ENCODE measurements at regions of chr3 and their contacts with region 1.

Region 1: GRCh38 chr3:195850857-195851543 is 39.3 kb upstream of the MUC4 start:
- DNase-seq: peak; percentile 90

Region 2: DNA sequence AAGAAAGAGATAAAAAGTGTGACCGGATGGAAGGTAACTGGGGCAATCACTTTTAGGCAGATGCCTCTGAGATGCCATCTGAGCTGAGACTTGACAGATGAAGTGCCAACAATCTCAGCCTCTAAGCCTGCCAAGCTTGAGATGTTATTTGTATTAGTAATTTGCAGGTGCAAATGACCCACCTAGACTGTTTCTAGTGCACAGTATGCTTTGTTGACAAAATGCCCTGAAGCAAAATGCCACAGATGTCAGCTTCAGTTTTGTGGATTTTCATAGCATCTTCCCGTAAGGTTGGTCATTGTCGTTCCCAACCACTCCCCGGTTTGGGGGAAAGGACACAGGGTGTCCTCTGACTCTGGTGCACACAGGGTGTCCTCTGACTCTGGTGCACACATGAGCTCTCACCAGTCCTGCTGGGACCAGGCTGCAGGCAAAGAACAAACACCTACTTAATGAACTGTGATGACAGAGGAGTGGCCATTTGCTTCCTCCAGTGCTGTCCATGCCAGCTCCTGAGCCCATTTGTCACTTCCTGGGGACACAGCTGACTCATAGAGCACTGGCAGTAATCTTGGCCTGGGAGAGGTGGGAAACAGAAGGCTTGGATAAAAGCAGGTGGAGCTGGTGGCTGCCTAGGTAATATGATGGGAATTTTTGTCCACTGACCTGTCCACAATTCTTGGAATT is 291.1 kb before region 1 on chr3:
- intact Hi-C with region 1: loop called (anchors 10 kb)
- DNase-seq: no peak

Region 3: GRCh38 chr3:195760345-195761122 is 90.5 kb before region 1 on chr3:
- intact Hi-C with region 1: no loop called
- DNase-seq: peak; percentile 56